Activated CD4-positive, alpha-beta T cell treated with anti-CD3 and anti-CD28 coated beads for 36 hours (primary cell): ENCODE measurements at regions of chr10 and their contacts with region 1.

Region 1: GRCh38 chr10:72088889-72089575 is 681 bp upstream of the SPOCK2 start:
- DNase-seq: peak; percentile 79
- ATAC-seq: peak; percentile 50
- H3K4me3 Mint-ChIP-seq: peak overlapping the region; percentile 98
- H3K27ac Mint-ChIP-seq: peak overlapping the region; percentile 100
- H3K4me1 Mint-ChIP-seq: peaks cover 57% of the 10 kb centered on the region
- H3K27me3 Mint-ChIP-seq: no peaks in the 10 kb centered on the region

Region 2: GRCh38 chr10:71790749-71791552 is 298.1 kb before region 1 on chr10:
- CTCF ChIA-PET with region 1: no interaction called
- POLR2A ChIA-PET with region 1: no interaction called
- intact Hi-C with region 1: no loop called
- DNase-seq: no peak
- ATAC-seq: peak; percentile 88
- H3K4me3 Mint-ChIP-seq: no peak overlapping the region
- H3K27ac Mint-ChIP-seq: no peak overlapping the region
- H3K4me1 Mint-ChIP-seq: peaks cover 6% of the 10 kb centered on the region
- H3K27me3 Mint-ChIP-seq: no peaks in the 10 kb centered on the region

Region 3: DNA sequence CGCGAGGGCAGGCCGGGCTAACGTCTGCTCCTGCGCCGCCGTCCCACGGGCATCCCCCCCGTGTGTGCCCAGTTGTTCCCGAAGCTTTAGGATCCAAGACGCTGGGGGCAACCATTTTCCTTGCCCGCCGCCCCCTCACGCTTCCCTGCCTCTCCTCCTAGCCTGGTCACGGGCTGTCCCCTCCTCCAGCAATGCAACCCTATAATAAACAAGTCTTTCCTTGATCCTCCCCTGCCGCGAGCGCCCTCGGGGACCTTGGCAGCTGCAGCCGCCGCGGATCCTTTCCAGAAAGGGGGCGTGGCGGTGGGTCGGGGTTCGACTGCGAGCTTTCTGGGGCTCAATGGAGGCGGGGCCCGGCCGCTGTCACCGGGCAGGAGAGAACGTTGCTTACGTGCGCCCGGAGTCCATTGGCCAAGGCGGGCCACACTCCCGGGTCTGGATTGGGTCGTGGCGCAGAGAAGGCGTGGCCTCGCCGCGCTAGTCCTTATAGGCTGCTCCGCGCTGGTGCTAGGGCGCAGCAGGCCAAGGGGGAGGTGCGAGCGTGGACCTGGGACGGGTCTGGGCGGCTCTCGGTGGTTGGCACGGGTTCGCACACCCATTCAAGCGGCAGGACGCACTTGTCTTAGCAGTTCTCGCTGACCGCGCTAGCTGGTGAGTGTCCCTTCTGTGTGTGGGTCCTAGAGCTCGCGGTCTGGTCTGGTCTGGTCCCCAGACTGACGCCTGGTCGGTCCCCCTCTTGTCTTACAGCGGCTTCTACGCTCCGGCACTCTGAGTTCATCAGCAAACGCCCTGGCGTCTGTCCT is 184.6 kb after region 1 on chr10 and contains the start of gene DDIT4:
- CTCF ChIA-PET with region 1: no interaction called
- POLR2A ChIA-PET with region 1: no interaction called
- intact Hi-C with region 1: loop called in 1 of 2 experiments (anchors 2 kb)
- DNase-seq: peak; percentile 100
- ATAC-seq: peak; percentile 84
- H3K4me3 Mint-ChIP-seq: peak within 1 kb of the TSS; percentile 95
- H3K27ac Mint-ChIP-seq: peak within 1 kb of the TSS; percentile 99
- H3K4me1 Mint-ChIP-seq: peaks cover 44% of the 10 kb centered on the region
- H3K27me3 Mint-ChIP-seq: no peaks in the 10 kb centered on the region
- total RNA-seq, gene DDIT4: 750 to 1,039 TPM